Motor neuron (in vitro differentiated cells): ENCODE measurements at regions of chrX and their contacts with region 1.

Region 1: GRCh38 chrX:114959729-114960128 is 57.7 kb downstream of the IL13RA2 start:
- ATAC-seq: no peak
- H3K4me3 ChIP-seq: no peak overlapping the region
- H3K27ac ChIP-seq: no peak overlapping the region
- H3K4me1 ChIP-seq: no peaks in the 10 kb centered on the region

Region 2: GRCh38 chrX:114626323-114626722 is 333.4 kb before region 1 on chrX:
- in situ Hi-C with region 1: loop called in 1 of 9 experiments (anchors 25 kb)
- ATAC-seq: no peak
- H3K4me3 ChIP-seq: no peak overlapping the region
- H3K27ac ChIP-seq: no peak overlapping the region
- H3K4me1 ChIP-seq: no peaks in the 10 kb centered on the region

Region 3: GRCh38 chrX:115191490-115192243 is 231.9 kb after region 1 on chrX:
- in situ Hi-C with region 1: no loop called
- ATAC-seq: no peak
- H3K4me3 ChIP-seq: no peak overlapping the region
- H3K27ac ChIP-seq: no peak overlapping the region
- H3K4me1 ChIP-seq: no peaks in the 10 kb centered on the region